ENCODE measurements at regions of chr3 and their contacts with region 1.

Region 1: DNA sequence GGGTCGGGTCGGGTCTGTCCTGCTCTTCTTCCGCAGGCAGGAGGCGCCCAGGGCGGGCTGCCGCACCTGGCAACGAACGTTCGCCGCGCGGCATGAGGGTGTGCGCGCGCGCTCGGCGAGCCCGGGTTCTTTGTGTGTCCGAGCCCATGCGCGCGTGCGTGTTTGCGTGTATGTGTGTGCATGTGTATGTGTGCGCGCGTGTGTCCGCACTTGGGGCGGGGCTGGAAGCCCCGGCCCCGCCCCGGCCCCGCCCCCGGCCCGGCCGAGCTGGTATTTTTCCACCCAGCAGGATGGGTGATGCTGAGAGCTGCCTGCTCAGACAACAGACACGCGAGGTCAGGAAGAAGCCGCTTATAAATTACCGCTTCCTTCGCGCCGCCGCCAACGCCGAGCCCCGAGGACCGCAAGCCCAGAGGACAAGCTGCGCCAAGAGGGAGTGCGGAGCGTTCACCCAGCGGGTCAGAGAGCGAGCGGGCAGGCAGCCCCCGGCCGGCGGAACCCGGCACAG is at the start of gene SLC6A6:
- DNase-seq: peak; percentile 93
- ATAC-seq: peak; percentile 84
- H3K4me3 ChIP-seq: peak within 1 kb of the TSS; percentile 73
- H3K27ac ChIP-seq: peak within 1 kb of the TSS; percentile 80
- H3K4me1 ChIP-seq: peaks cover 19% of the 10 kb centered on the region
- H3K27me3 ChIP-seq: no peaks in the 10 kb centered on the region
- CTCF ChIP-seq: peak; percentile 36
- POLR2A ChIP-seq: peak; percentile 87
- RAD21 ChIP-seq: peak; percentile 39
- total RNA-seq, gene SLC6A6: 29.9 and 32.5 TPM in 2 replicates

Region 2: GRCh38 chr3:14452679-14453367 is 50.5 kb after region 1 on chr3:
- CTCF ChIA-PET with region 1: no interaction called
- POLR2A ChIA-PET with region 1: no interaction called
- dilution Hi-C with region 1: no loop called
- in situ Hi-C with region 1: no loop called
- intact Hi-C with region 1: loop called (anchors 2 kb)
- DNase-seq: peak; percentile 98
- ATAC-seq: peak; percentile 87
- H3K4me3 ChIP-seq: no peak overlapping the region
- H3K27ac ChIP-seq: peak overlapping the region; percentile 87
- H3K4me1 ChIP-seq: peaks cover 22% of the 10 kb centered on the region
- H3K27me3 ChIP-seq: no peaks in the 10 kb centered on the region
- CTCF ChIP-seq: 0 out of 2 replicates have a peak, but pooled peaks have one; percentile 21
- POLR2A ChIP-seq: peak; percentile 75
- RAD21 ChIP-seq: no peak; the same call in 1 of the 2 replicates

Region 3: DNA sequence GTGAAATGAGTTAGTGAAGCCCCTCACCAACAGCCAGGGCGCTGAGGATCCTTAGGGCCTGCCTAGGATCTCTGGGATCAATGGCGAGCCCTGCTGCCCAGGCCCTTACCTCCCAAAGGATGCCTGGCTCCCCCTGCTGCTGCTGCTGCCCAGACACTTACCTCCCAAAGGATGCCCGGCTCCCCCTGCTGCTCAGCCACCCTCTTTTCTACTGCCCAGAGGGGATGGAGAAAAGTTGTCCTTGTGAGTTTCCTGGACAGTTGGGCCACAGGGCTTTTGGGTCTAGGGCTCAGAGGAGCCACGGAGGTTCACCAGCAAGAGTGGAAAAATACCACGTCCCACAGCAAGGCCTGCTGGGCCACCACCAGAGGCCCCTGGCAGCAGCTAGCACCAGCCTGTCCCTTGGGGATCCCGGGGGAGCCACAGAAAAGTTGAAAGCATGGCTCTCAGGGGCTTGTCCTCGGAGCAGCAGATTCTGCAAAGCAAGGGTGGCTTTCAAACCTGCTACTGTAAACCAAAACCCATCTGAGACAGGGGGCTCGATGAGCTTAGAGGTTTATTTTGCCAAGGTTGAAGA is 59.5 kb after region 1 on chr3:
- CTCF ChIA-PET with region 1: interaction called, 4 read pairs
- POLR2A ChIA-PET with region 1: no interaction called
- dilution Hi-C with region 1: no loop called
- in situ Hi-C with region 1: loop called (anchors 5 kb)
- intact Hi-C with region 1: loop called (anchors 2 kb)
- DNase-seq: peak; percentile 73
- ATAC-seq: peak; percentile 61
- H3K4me3 ChIP-seq: no peak overlapping the region
- H3K27ac ChIP-seq: peak overlapping the region; percentile 21; the same call in 1 of the 2 replicates
- H3K4me1 ChIP-seq: peaks cover 11% of the 10 kb centered on the region; the same call in 1 of the 2 replicates
- H3K27me3 ChIP-seq: no peaks in the 10 kb centered on the region
- CTCF ChIP-seq: peak; percentile 98
- POLR2A ChIP-seq: no peak
- RAD21 ChIP-seq: peak; percentile 88

Region 4: GRCh38 chr3:14480207-14481025 is 78.1 kb after region 1 on chr3:
- CTCF ChIA-PET with region 1: no interaction called
- POLR2A ChIA-PET with region 1: no interaction called
- dilution Hi-C with region 1: no loop called
- in situ Hi-C with region 1: no loop called
- intact Hi-C with region 1: no loop called
- DNase-seq: peak; percentile 94
- ATAC-seq: peak; percentile 85
- H3K4me3 ChIP-seq: no peak overlapping the region
- H3K27ac ChIP-seq: no peak overlapping the region
- H3K4me1 ChIP-seq: no peaks in the 10 kb centered on the region
- H3K27me3 ChIP-seq: no peaks in the 10 kb centered on the region
- CTCF ChIP-seq: no peak
- POLR2A ChIP-seq: no peak
- RAD21 ChIP-seq: no peak

Measured in IMR-90 (cell line).